ENCODE measurements at regions of chr13 and their contacts with region 1.

Region 1: GRCh38 chr13:41004875-41005693 is 14.0 kb downstream of the ELF1 start:
- DNase-seq: peak in 2 of 9 experiments; percentile 62 to 80
- ATAC-seq: peak; percentile 83
- H3K4me3 ChIP-seq: peak overlapping the region; percentile 6 to 13
- H3K4me3 Mint-ChIP-seq: peak overlapping the region; percentile 73
- H3K27ac ChIP-seq: peak overlapping the region; percentile 18 to 76
- H3K27ac Mint-ChIP-seq: peak overlapping the region; percentile 90
- H3K4me1 ChIP-seq: peaks cover 78% of the 10 kb centered on the region
- H3K4me1 Mint-ChIP-seq: peaks cover 79% of the 10 kb centered on the region
- H3K27me3 ChIP-seq: no peaks in the 10 kb centered on the region
- H3K27me3 Mint-ChIP-seq: no peaks in the 10 kb centered on the region
- CTCF ChIP-seq: no peak

Region 2: DNA sequence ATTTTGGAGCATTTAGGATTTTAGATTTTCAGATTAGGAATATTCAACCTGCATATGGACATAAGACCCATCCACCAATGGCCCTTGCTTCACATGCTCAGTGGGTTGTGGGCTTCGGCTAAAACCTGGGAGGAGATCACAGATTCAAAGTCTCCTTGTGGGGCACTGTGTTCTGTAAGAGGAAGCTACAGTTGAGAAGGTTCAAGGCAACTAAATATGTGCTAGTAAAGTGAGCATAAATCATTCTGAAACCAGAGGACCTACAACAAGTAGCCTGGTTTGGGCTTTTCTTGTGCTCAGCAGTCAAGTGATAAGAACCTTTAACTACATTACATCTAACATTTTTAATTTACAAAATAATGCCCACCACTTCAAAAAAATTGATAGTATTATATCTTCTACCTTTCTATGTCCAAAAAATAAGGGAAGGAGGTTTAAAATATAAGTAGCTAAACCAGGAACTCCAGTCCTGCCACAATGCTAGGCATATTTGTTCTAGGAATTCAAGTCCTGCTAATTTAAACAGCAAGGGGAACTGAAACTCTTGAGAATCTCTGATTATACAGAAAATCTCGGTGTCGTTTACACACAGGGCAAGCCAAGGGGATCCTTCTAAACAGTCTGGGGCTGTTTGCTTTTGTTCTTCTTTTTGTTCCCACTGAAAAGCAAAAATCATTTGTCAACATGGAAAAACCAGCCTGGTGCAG is 375.3 kb before region 1 on chr13:
- CTCF ChIA-PET with region 1: no interaction called
- POLR2A ChIA-PET with region 1: no interaction called
- intact Hi-C with region 1: no loop called
- DNase-seq: no peak
- ATAC-seq: no peak
- H3K4me3 ChIP-seq: no peak overlapping the region
- H3K4me3 Mint-ChIP-seq: peak overlapping the region; percentile 35
- H3K27ac ChIP-seq: no peak overlapping the region
- H3K27ac Mint-ChIP-seq: peak overlapping the region; percentile 80
- H3K4me1 ChIP-seq: peaks cover 81% of the 10 kb centered on the region
- H3K4me1 Mint-ChIP-seq: peaks cover 87% of the 10 kb centered on the region
- H3K27me3 ChIP-seq: no peaks in the 10 kb centered on the region
- H3K27me3 Mint-ChIP-seq: no peaks in the 10 kb centered on the region
- CTCF ChIP-seq: no peak

Region 3: DNA sequence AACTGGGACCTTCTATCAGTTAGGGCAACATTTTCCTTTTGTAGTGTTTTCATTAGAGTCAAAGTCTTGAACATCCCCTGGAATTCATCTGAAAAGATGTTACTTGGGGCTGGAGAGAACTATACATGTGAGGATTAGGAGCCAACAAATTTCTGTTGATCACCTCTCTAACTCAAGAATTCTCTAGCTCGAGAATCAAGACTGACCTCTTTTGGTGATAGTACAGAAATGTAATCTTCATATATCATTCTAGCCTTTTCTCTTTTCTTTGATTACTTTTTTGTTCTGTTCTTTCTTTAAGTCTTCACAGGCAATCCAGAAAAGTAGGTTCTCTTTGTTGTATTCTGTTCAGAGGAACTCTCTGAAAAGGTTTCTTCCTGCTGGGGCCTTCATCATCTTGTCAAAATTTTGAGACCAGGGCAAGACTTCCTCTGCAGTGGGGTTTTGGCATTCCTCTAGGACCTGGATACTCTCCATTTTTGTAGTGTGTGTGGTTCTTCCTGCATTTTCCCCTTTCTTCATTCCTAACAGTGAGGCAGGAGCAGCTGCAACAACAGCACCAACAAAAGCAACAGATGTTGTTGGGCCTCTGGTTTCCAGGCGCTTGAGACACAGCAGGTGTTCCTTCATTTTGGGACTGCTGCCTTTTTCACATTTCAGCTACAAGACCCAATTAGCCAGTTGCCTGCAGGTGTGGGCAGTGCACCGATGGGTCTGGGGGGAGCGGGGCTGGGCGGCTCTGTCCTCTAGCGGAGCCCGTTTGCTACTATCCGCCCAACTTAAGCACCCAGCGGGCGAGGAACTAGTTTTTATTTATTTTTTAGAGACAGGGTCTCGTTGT is 12.2 kb before region 1 on chr13:
- CTCF ChIA-PET with region 1: no interaction called
- POLR2A ChIA-PET with region 1: interaction called, 4 read pairs
- intact Hi-C with region 1: loop called (anchors 1 to 2 kb)
- DNase-seq: peak in 2 of 9 experiments; percentile 47 to 66
- ATAC-seq: peak; percentile 52
- H3K4me3 ChIP-seq: no peak overlapping the region
- H3K4me3 Mint-ChIP-seq: peak overlapping the region; percentile 43
- H3K27ac ChIP-seq: peak overlapping the region in 1 of 2 experiments; percentile 17
- H3K27ac Mint-ChIP-seq: peak overlapping the region; percentile 86
- H3K4me1 ChIP-seq: peaks cover 88% of the 10 kb centered on the region
- H3K4me1 Mint-ChIP-seq: peaks cover 83% of the 10 kb centered on the region
- H3K27me3 ChIP-seq: no peaks in the 10 kb centered on the region
- H3K27me3 Mint-ChIP-seq: no peaks in the 10 kb centered on the region
- CTCF ChIP-seq: peak; percentile 47

Region 4: GRCh38 chr13:41019011-41019487 is 14.0 kb after region 1 on chr13 and contains the start of gene ELF1:
- CTCF ChIA-PET with region 1: no interaction called
- POLR2A ChIA-PET with region 1: interaction called, 7 read pairs
- intact Hi-C with region 1: loop called in 1 of 2 experiments (anchors 1 kb)
- DNase-seq: peak in 8 of 9 experiments; percentile 28 to 89 (median 63)
- ATAC-seq: peak; percentile 88
- H3K4me3 ChIP-seq: peak within 1 kb of the TSS; percentile 56 to 68
- H3K4me3 Mint-ChIP-seq: peak within 1 kb of the TSS; percentile 88
- H3K27ac ChIP-seq: peak within 1 kb of the TSS; percentile 91 to 95
- H3K27ac Mint-ChIP-seq: peak within 1 kb of the TSS; percentile 97
- H3K4me1 ChIP-seq: peaks cover 25% of the 10 kb centered on the region
- H3K4me1 Mint-ChIP-seq: peaks cover 47% of the 10 kb centered on the region
- H3K27me3 ChIP-seq: no peaks in the 10 kb centered on the region
- H3K27me3 Mint-ChIP-seq: no peaks in the 10 kb centered on the region
- CTCF ChIP-seq: no peak
- total RNA-seq, gene ELF1: 308 to 313 TPM

Region 5: GRCh38 chr13:41864658-41865057 is 859.6 kb after region 1 on chr13:
- CTCF ChIA-PET with region 1: no interaction called
- POLR2A ChIA-PET with region 1: no interaction called
- intact Hi-C with region 1: no loop called
- DNase-seq: peak in 1 of 9 experiments; percentile 3
- ATAC-seq: no peak
- H3K4me3 ChIP-seq: no peak overlapping the region
- H3K4me3 Mint-ChIP-seq: no peak overlapping the region
- H3K27ac ChIP-seq: no peak overlapping the region
- H3K27ac Mint-ChIP-seq: no peak overlapping the region
- H3K4me1 ChIP-seq: no peaks in the 10 kb centered on the region
- H3K4me1 Mint-ChIP-seq: peaks cover 10% of the 10 kb centered on the region
- H3K27me3 ChIP-seq: no peaks in the 10 kb centered on the region
- H3K27me3 Mint-ChIP-seq: no peaks in the 10 kb centered on the region
- CTCF ChIP-seq: no peak

Region 6: GRCh38 chr13:41973247-41973741 is 968.2 kb after region 1 on chr13:
- CTCF ChIA-PET with region 1: no interaction called
- POLR2A ChIA-PET with region 1: no interaction called
- intact Hi-C with region 1: no loop called
- DNase-seq: no peak
- ATAC-seq: no peak
- H3K4me3 ChIP-seq: no peak overlapping the region
- H3K4me3 Mint-ChIP-seq: no peak overlapping the region
- H3K27ac ChIP-seq: no peak overlapping the region
- H3K27ac Mint-ChIP-seq: no peak overlapping the region
- H3K4me1 ChIP-seq: no peaks in the 10 kb centered on the region
- H3K4me1 Mint-ChIP-seq: peaks cover 16% of the 10 kb centered on the region
- H3K27me3 ChIP-seq: no peaks in the 10 kb centered on the region
- H3K27me3 Mint-ChIP-seq: no peaks in the 10 kb centered on the region
- CTCF ChIP-seq: no peak

Measured in CD8-positive, alpha-beta T cell (primary cell).